ENCODE measurements at regions of chr18 and their contacts with region 1.

Region 1: DNA sequence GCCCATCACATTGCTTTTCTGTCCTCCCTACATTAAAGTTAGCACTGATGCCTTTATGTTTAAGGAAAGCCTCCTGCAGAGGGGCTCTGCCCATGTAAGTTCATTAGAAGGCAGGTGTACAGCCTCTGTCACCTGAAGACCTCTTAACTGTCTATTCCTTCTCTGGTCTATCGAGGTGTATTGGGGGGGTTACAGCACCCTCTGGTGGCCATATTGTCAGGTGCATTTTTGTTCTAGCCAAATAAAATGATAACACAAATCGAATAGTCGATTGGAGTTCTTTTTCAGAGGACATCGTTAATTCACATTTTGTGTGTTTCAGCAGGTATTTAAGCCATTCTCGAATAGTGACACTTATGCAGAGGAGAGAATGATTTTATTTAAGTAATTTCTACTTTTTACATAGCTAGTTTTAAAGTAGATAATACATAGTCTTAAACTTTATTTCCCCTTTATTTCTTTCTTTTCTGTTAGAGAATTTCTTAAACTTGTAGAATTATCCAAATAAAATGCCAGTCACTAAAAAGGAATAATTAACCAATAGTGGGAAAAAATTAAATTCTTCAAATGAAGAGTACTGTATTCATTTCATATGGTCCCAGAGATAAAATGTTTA is 136.8 kb downstream of the NEDD4L start:
- DNase-seq: peak; percentile 25 to 75 (median 62)
- ATAC-seq: peak; percentile 52
- H3K4me3 ChIP-seq: no peak overlapping the region
- H3K4me3 Mint-ChIP-seq: no peak overlapping the region
- H3K27ac ChIP-seq: no peak overlapping the region
- H3K27ac Mint-ChIP-seq: no peak overlapping the region
- H3K4me1 ChIP-seq: no peaks in the 10 kb centered on the region
- H3K4me1 Mint-ChIP-seq: no peaks in the 10 kb centered on the region
- H3K27me3 ChIP-seq: no peaks in the 10 kb centered on the region
- H3K27me3 Mint-ChIP-seq: peaks cover 2% of the 10 kb centered on the region
- CTCF ChIP-seq: peak; percentile 97

Region 2: DNA sequence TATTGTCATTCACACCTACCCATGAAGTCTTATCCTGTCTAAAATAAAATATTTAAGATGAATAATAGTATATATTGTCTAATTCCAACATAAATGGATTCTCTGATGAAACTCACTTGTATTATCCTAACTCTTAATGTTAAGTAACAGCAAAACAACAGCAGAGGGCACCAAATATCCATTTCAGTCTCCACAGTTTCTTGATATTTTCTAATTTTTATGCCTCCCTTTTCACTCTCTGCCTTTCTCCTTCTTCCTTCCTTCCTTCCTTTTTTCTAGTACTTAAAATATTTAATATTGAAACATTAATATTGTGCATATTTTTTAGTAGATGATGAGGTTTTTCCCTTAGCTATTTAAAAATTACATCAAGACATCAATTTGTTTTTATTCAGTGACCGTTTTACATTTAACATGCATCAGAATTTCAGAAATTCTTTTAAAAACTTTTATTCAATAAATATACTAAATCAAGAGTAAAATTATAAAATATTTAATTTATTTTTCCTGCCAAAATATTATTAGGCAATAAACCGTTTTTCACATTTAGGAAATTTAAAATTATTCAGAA is 1432.1 kb before region 1 on chr18:
- CTCF ChIA-PET with region 1: no interaction called
- POLR2A ChIA-PET with region 1: no interaction called
- intact Hi-C with region 1: loop called in 1 of 2 experiments (anchors 5 kb)
- DNase-seq: peak in 2 of 9 experiments; percentile 32 to 44
- ATAC-seq: no peak
- H3K4me3 ChIP-seq: no peak overlapping the region
- H3K4me3 Mint-ChIP-seq: no peak overlapping the region
- H3K27ac ChIP-seq: no peak overlapping the region
- H3K27ac Mint-ChIP-seq: no peak overlapping the region
- H3K4me1 ChIP-seq: peaks cover 7% of the 10 kb centered on the region
- H3K4me1 Mint-ChIP-seq: peaks cover 24% of the 10 kb centered on the region
- H3K27me3 ChIP-seq: no peaks in the 10 kb centered on the region
- H3K27me3 Mint-ChIP-seq: no peaks in the 10 kb centered on the region
- CTCF ChIP-seq: peak; percentile 67

Region 3: GRCh38 chr18:57389271-57389670 is 791.6 kb before region 1 on chr18:
- CTCF ChIA-PET with region 1: no interaction called
- POLR2A ChIA-PET with region 1: no interaction called
- intact Hi-C with region 1: no loop called
- DNase-seq: no peak
- ATAC-seq: no peak
- H3K4me3 ChIP-seq: no peak overlapping the region
- H3K4me3 Mint-ChIP-seq: no peak overlapping the region
- H3K27ac ChIP-seq: no peak overlapping the region
- H3K27ac Mint-ChIP-seq: no peak overlapping the region
- H3K4me1 ChIP-seq: no peaks in the 10 kb centered on the region
- H3K4me1 Mint-ChIP-seq: no peaks in the 10 kb centered on the region
- H3K27me3 ChIP-seq: no peaks in the 10 kb centered on the region
- H3K27me3 Mint-ChIP-seq: peaks cover 29% of the 10 kb centered on the region
- CTCF ChIP-seq: no peak

Region 4: GRCh38 chr18:57630002-57630753 is 550.7 kb before region 1 on chr18:
- CTCF ChIA-PET with region 1: no interaction called
- POLR2A ChIA-PET with region 1: no interaction called
- intact Hi-C with region 1: loop called in 1 of 2 experiments (anchors 5 kb)
- DNase-seq: peak; percentile 86 to 96 (median 95)
- ATAC-seq: peak; percentile 99
- H3K4me3 ChIP-seq: peak overlapping the region; percentile 71 to 90
- H3K4me3 Mint-ChIP-seq: peak overlapping the region; percentile 97
- H3K27ac ChIP-seq: peak overlapping the region; percentile 46 to 59
- H3K27ac Mint-ChIP-seq: peak overlapping the region; percentile 92
- H3K4me1 ChIP-seq: peaks cover 15% of the 10 kb centered on the region
- H3K4me1 Mint-ChIP-seq: peaks cover 16% of the 10 kb centered on the region
- H3K27me3 ChIP-seq: no peaks in the 10 kb centered on the region
- H3K27me3 Mint-ChIP-seq: no peaks in the 10 kb centered on the region
- CTCF ChIP-seq: peak; percentile 70

Region 5: GRCh38 chr18:58321986-58322385 is 141.1 kb after region 1 on chr18:
- CTCF ChIA-PET with region 1: interaction called, 8 read pairs
- POLR2A ChIA-PET with region 1: no interaction called
- intact Hi-C with region 1: loop called in 1 of 2 experiments (anchors 1 kb)
- DNase-seq: peak; percentile 6 to 70 (median 42)
- ATAC-seq: peak; percentile 83
- H3K4me3 ChIP-seq: no peak overlapping the region
- H3K4me3 Mint-ChIP-seq: no peak overlapping the region
- H3K27ac ChIP-seq: no peak overlapping the region
- H3K27ac Mint-ChIP-seq: peak overlapping the region; percentile 10
- H3K4me1 ChIP-seq: peaks cover 11% of the 10 kb centered on the region
- H3K4me1 Mint-ChIP-seq: peaks cover 7% of the 10 kb centered on the region
- H3K27me3 ChIP-seq: no peaks in the 10 kb centered on the region
- H3K27me3 Mint-ChIP-seq: no peaks in the 10 kb centered on the region
- CTCF ChIP-seq: peak; percentile 34

Measured in CD8-positive, alpha-beta T cell (primary cell).